AG04449 (cell line): ENCODE measurements at regions of chr17 and their contacts with region 1.

Region 1: DNA sequence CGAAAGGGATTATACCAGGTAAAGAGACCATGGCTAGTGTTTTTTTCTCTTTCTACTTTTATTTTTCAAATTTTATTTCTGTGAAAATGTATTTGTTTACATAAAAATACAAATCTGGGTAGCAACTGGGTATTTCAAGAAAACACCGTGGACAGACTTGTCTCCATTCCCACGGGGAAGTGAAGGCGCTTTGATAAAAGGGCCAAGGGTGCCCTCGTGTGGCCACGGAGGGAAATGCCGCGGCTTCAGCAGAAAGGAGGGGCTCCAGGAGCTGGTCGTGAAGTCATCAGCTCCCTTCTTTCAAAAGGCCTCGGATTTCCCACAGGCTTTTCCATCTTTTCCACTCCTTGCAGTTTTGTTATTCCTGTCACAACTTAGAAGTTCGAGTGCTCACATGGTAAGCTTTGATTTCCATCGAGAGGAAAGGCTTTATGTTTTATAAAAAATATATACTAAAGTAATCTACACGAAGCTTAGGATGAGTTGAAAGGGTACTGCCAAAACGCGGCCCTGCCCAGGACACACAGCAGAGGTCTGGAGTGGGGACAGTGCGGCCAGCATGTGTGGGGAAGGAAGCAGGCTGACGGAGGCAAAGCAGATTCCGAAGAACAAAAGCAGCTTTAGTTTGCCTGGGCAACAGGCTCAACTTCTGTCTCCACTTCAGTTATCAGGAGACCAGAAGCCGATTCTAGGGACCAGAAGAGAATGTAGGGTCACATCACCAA is 15.3 kb upstream of the MNT start:
- DNase-seq: no peak
- H3K4me3 ChIP-seq: no peak overlapping the region
- CTCF ChIP-seq: peak; percentile 92

Region 2: GRCh38 chr17:2259769-2260536 is 156.2 kb before region 1 on chr17:
- CTCF ChIA-PET with region 1: no interaction called
- POLR2A ChIA-PET with region 1: no interaction called
- DNase-seq: no peak
- H3K4me3 ChIP-seq: no peak overlapping the region
- CTCF ChIP-seq: no peak

Region 3: DNA sequence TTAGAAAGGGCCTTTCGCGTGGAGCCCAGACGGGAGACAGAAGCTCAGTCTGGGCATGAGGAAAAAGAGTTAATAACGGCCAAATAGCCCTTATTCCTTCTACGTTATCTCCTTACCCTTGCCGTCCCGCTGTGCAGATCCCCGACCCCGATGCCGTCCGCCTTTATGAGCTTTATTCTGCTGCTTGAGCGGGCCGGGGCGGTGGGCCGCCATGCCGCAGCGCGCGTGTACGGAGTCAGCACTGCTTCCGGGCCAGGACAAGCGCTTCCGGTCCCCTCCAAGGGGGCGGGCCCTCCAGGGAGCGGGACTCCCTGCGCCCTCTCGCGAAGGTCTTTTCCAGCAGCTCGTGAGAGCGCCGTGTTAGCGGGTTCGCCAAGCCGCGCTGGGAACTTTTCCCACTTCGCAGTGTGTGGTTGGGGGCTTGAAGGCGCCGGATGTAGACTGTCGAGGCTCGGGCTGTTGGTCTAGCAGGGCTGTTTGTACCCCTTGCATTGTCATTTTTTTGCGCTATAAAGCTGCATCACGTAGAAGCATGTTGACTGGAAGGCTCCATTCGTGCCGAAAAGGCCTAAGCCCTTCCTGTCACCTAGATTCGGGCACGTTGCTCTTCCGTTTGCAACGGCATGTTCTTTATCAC is 79.8 kb before region 1 on chr17 and contains the start of gene TSR1:
- CTCF ChIA-PET with region 1: interaction called, 28 read pairs
- POLR2A ChIA-PET with region 1: interaction called, 3 read pairs
- DNase-seq: peak; percentile 28
- H3K4me3 ChIP-seq: peak within 1 kb of the TSS; percentile 93
- CTCF ChIP-seq: peak; percentile 58

Region 4: DNA sequence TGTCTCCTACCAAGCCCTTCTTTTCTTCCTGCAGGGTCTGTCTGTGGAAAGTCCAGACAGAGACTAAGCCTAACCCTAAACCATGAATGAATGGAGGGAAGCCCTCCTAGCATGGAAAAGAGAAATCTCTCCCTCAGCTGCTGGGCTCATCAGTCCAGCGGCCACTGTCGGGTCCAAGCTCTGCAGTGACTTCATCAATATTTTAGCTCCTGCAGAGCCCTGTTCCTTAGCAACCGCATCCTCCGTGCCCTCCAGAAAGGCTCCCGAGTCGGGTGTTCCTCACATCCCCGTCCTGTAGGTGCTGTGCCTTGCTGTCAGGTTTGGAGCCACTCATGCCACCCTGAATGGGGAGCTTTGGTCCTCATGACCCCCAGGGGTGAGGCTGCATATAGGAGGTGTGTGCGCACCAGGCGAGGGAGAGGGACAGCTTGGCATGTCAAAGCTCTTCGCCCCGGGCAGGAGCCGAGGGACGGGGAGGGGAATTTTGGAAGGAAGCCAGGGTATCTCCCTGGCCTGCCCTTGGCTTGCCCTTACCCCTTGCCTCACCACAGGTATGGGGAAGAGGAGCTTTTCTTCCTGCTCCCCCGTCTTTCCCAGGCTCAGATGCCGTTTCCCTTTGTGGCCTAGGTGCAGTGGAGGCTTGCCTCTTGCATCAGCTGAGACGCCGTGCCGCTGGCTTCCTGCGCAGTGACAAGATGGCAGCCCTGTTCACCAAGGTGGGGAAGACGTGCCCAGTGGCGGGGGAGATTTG is 55.0 kb before region 1 on chr17:
- CTCF ChIA-PET with region 1: interaction called, 16 read pairs
- POLR2A ChIA-PET with region 1: no interaction called
- DNase-seq: no peak
- H3K4me3 ChIP-seq: no peak overlapping the region
- CTCF ChIP-seq: no peak

Region 5: GRCh38 chr17:2380226-2380922 is 35.8 kb before region 1 on chr17:
- CTCF ChIA-PET with region 1: interaction called, 871 read pairs
- POLR2A ChIA-PET with region 1: interaction called, 17 read pairs
- DNase-seq: no peak
- H3K4me3 ChIP-seq: no peak overlapping the region
- CTCF ChIP-seq: no peak

Region 6: GRCh38 chr17:2392252-2393173 is 23.7 kb before region 1 on chr17:
- CTCF ChIA-PET with region 1: interaction called, 871 read pairs
- POLR2A ChIA-PET with region 1: interaction called, 5 read pairs
- DNase-seq: no peak
- H3K4me3 ChIP-seq: peak overlapping the region; percentile 62
- CTCF ChIP-seq: no peak

Region 7: DNA sequence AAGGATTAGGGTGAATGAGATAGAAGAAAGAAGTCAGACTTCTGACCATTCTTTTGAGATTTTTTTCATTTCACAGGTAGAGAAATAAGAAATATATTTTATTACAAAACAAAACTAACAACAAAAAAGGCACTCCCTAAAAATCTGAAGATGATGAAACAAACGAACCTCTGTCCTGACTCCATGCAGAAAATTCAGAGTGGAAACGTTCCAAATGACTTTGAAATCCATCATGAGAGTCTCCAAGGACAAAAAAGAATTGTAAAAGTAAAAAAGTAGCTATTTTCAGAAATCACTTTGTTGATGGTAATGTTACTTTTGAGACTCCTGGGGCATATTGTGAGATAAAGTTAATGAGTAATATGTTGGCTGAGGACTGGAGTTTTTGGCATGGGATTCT is 11.0 kb after region 1 on chr17:
- CTCF ChIA-PET with region 1: interaction called, 24 read pairs
- POLR2A ChIA-PET with region 1: interaction called, 3 read pairs
- DNase-seq: no peak
- H3K4me3 ChIP-seq: no peak overlapping the region
- CTCF ChIP-seq: no peak

Region 8: GRCh38 chr17:2500446-2500845 is 84.3 kb after region 1 on chr17:
- CTCF ChIA-PET with region 1: no interaction called
- POLR2A ChIA-PET with region 1: no interaction called
- DNase-seq: no peak
- H3K4me3 ChIP-seq: no peak overlapping the region
- CTCF ChIP-seq: no peak